ENCODE measurements at regions of chr1 and their contacts with region 1.

Region 1: GRCh38 chr1:180168786-180169639 is 14.3 kb downstream of the QSOX1 start:
- DNase-seq: peak; percentile 80
- ATAC-seq: peak; percentile 77
- H3K4me3 Mint-ChIP-seq: no peak overlapping the region
- H3K27ac Mint-ChIP-seq: peak overlapping the region; percentile 95
- H3K4me1 Mint-ChIP-seq: peaks cover 52% of the 10 kb centered on the region
- H3K27me3 Mint-ChIP-seq: no peaks in the 10 kb centered on the region
- CTCF ChIP-seq: peak; percentile 56

Region 2: DNA sequence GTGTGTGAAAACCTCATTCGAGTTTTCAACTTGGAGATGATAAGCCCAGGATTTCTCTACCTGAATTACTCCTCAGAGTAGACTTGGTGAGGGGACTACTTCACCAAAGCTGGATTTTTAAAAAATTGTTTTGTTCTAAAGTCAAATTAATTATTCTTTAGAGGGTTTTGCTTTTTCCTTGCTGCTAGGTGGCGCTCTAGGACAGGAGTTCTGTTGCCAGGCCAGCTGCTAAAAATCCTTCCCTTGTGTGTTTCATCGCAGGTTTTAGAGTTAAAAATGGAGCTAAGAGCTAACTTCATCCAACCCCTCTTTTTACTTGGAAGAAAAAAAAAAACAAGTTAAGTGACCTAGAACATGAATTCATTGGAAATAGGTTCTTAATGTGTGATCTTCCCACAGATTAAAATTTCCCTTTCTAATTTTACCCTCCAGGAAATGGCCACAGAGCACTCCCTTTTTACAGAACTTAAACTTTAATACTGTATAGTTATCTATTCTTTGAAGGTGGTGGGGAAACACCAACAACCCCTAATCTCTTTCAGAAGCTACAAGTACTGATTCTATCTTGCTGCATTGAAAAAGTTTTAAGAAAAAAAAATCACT is 462.6 kb before region 1 on chr1:
- CTCF ChIA-PET with region 1: interaction called, 11 read pairs
- POLR2A ChIA-PET with region 1: no interaction called
- DNase-seq: peak; percentile 53
- ATAC-seq: peak; percentile 41; the same call in 1 of the 2 replicates
- H3K4me3 Mint-ChIP-seq: no peak overlapping the region
- H3K27ac Mint-ChIP-seq: no peak overlapping the region
- H3K4me1 Mint-ChIP-seq: no peaks in the 10 kb centered on the region
- H3K27me3 Mint-ChIP-seq: no peaks in the 10 kb centered on the region
- CTCF ChIP-seq: peak; percentile 68

Region 3: DNA sequence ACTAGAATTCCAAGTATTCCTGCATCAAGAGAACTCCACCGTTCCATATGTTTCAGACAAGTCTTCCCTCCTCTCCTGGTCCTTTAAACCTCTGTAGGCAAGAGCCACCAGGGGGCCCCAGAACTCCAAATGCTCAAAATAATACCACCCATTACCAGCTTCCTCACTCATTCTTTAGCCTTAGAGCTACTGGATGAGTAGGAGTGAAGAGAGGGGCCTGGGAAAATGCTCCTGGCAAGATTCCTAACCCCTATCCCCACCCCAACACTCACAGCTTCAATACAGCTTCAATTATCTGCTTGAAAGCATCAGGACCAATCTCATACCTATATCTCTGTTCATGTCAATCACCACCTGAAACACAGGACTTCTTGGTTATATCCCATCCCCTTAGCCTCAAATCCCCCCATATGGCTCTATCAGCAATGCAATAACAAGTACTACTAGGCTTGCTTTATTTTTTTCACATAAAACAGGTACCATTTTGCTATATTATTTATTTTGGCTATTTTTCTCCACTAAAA is 301.1 kb before region 1 on chr1:
- CTCF ChIA-PET with region 1: interaction called, 20 read pairs
- POLR2A ChIA-PET with region 1: no interaction called
- DNase-seq: peak; percentile 70
- ATAC-seq: peak; percentile 99
- H3K4me3 Mint-ChIP-seq: no peak overlapping the region
- H3K27ac Mint-ChIP-seq: 0 out of 2 replicates have a peak overlapping the region, but pooled peaks have one; percentile 18
- H3K4me1 Mint-ChIP-seq: peaks cover 4% of the 10 kb centered on the region; the same call in 1 of the 2 replicates
- H3K27me3 Mint-ChIP-seq: no peaks in the 10 kb centered on the region
- CTCF ChIP-seq: peak; percentile 45

Region 4: DNA sequence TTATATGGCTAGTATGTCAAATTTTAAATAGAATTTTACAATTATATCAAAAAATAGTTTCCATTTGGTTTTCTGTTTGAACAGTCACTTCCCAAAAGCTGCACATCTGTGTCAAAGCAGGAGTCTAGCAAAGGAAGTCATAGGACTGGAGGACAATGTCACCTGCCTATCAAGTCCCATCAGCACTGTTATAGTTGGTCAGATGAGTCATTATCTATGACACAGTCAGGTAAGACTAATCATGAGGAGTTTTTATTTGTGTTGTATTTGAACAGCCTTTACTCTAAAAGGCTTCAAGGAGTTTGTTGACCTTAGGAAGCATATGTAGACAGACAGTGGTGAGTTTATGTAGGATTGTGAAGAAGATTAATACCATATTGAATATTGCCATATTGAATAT is 88.6 kb before region 1 on chr1:
- CTCF ChIA-PET with region 1: interaction called, 10 read pairs
- POLR2A ChIA-PET with region 1: no interaction called
- DNase-seq: no peak
- ATAC-seq: no peak
- H3K4me3 Mint-ChIP-seq: no peak overlapping the region
- H3K27ac Mint-ChIP-seq: no peak overlapping the region
- H3K4me1 Mint-ChIP-seq: no peaks in the 10 kb centered on the region
- H3K27me3 Mint-ChIP-seq: no peaks in the 10 kb centered on the region
- CTCF ChIP-seq: no peak

Region 5: GRCh38 chr1:180092931-180093559 is 76.0 kb before region 1 on chr1:
- CTCF ChIA-PET with region 1: interaction called, 11 read pairs
- POLR2A ChIA-PET with region 1: no interaction called
- DNase-seq: no peak
- ATAC-seq: no peak
- H3K4me3 Mint-ChIP-seq: no peak overlapping the region
- H3K27ac Mint-ChIP-seq: no peak overlapping the region
- H3K4me1 Mint-ChIP-seq: no peaks in the 10 kb centered on the region
- H3K27me3 Mint-ChIP-seq: no peaks in the 10 kb centered on the region
- CTCF ChIP-seq: no peak

Region 6: DNA sequence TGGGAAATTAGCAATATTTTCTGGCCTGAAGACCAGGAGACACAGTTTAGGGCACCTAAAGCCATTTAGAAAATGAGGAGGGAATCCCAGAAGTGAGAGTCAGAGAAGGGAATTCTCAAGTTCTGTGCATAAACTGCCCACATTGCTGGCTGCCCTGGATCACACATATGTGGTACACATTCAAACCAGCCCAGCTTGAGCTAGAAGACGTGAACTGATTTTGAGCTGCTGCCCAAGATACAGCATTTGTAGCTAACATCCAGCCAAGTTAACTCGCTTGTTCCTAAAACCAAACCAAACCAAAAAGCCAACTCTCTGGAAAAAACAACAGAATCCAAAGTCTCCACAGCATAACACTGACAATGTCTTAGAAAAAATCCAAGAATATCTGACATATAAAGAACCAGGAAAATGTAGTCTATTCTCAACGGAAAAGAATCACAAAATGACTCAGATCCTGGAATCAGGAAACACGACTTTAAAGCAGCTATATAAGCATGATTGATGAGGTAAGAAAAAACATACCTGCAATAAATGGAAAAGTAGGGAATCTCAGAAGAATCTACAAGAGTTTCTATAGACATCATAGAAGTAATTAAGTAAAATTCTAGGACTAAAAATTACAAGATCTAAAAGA is 32.6 kb before region 1 on chr1:
- CTCF ChIA-PET with region 1: no interaction called
- POLR2A ChIA-PET with region 1: no interaction called
- DNase-seq: no peak
- ATAC-seq: no peak
- H3K4me3 Mint-ChIP-seq: no peak overlapping the region
- H3K27ac Mint-ChIP-seq: no peak overlapping the region
- H3K4me1 Mint-ChIP-seq: no peaks in the 10 kb centered on the region
- H3K27me3 Mint-ChIP-seq: no peaks in the 10 kb centered on the region; the same call in 1 of the 2 replicates
- CTCF ChIP-seq: no peak

Region 7: DNA sequence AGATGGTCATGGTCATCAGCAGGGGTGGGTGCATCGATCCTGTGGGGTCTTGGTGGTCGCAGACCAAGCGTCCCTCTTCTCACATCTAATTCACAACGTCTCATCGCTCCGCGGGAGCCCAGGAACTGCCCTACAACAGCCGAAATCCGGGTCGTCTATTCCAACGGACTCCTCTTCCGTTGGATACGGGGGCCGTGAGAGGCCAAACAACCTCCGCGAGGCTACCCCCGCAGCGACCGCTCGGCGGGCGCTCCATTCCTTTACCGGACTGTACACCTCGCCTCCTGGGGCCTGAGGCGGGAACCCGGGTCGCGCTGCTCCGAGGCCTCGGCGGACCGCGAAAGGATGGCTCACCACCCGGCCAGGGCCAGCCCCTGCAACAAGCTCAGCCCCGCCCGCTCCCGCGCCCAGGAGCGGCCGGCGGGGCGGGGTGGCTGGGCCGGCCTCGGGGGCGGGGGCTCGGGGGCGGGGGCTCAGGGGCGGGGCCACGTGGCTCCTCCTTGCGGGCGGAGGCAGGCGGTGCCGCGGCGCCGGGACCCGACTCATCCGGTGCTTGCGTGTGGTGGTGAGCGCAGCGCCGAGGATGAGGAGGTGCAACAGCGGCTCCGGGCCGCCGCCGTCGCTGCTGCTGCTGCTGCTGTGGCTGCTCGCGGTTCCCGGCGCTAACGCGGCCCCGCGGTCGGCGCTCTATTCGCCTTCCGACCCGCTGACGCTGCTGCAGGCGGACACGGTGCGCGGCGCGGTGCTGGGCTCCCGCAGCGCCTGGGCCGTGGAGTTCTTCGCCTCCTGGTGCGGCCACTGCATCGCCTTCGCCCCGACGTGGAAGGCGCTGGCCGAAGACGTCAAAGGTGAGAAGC is 14.5 kb before region 1 on chr1 and contains the start of gene QSOX1:
- CTCF ChIA-PET with region 1: interaction called, 69 read pairs
- POLR2A ChIA-PET with region 1: interaction called, 5 read pairs
- DNase-seq: peak; percentile 84
- ATAC-seq: peak; percentile 89
- H3K4me3 Mint-ChIP-seq: peak within 1 kb of the TSS; percentile 90
- H3K27ac Mint-ChIP-seq: peak within 1 kb of the TSS; percentile 58
- H3K4me1 Mint-ChIP-seq: peaks cover 28% of the 10 kb centered on the region
- H3K27me3 Mint-ChIP-seq: peaks cover 34% of the 10 kb centered on the region
- CTCF ChIP-seq: 0 out of 2 replicates have a peak, but pooled peaks have one; percentile 19
- total RNA-seq, gene QSOX1: 135 to 147 TPM (median 136 TPM) in 3 replicates

Region 8: GRCh38 chr1:180198196-180198595 is 29.2 kb after region 1 on chr1:
- CTCF ChIA-PET with region 1: interaction called, 13 read pairs
- POLR2A ChIA-PET with region 1: no interaction called
- DNase-seq: no peak
- ATAC-seq: peak; percentile 43
- H3K4me3 Mint-ChIP-seq: no peak overlapping the region
- H3K27ac Mint-ChIP-seq: no peak overlapping the region
- H3K4me1 Mint-ChIP-seq: peaks cover 3% of the 10 kb centered on the region; the same call in 1 of the 2 replicates
- H3K27me3 Mint-ChIP-seq: no peaks in the 10 kb centered on the region
- CTCF ChIP-seq: no peak

Region 9: GRCh38 chr1:180278596-180279395 is 109.8 kb after region 1 on chr1:
- CTCF ChIA-PET with region 1: no interaction called
- POLR2A ChIA-PET with region 1: no interaction called
- DNase-seq: no peak
- ATAC-seq: no peak
- H3K4me3 Mint-ChIP-seq: no peak overlapping the region
- H3K27ac Mint-ChIP-seq: no peak overlapping the region
- H3K4me1 Mint-ChIP-seq: peaks cover 35% of the 10 kb centered on the region
- H3K27me3 Mint-ChIP-seq: no peaks in the 10 kb centered on the region
- CTCF ChIP-seq: no peak

Region 10: GRCh38 chr1:180327089-180327488 is 158.1 kb after region 1 on chr1:
- CTCF ChIA-PET with region 1: no interaction called
- POLR2A ChIA-PET with region 1: no interaction called
- DNase-seq: no peak
- ATAC-seq: no peak
- H3K4me3 Mint-ChIP-seq: no peak overlapping the region
- H3K27ac Mint-ChIP-seq: no peak overlapping the region
- H3K4me1 Mint-ChIP-seq: no peaks in the 10 kb centered on the region
- H3K27me3 Mint-ChIP-seq: no peaks in the 10 kb centered on the region
- CTCF ChIP-seq: no peak